ENCODE measurements at regions of chr12 and their contacts with region 1.

Region 1: GRCh38 chr12:54201001-54201794 is 12.4 kb upstream of the SMUG1 start:
- DNase-seq: peak; percentile 35 to 78 (median 62)
- ATAC-seq: peak; percentile 98
- H3K4me3 ChIP-seq: no peak overlapping the region
- H3K4me3 Mint-ChIP-seq: no peak overlapping the region
- H3K27ac ChIP-seq: no peak overlapping the region
- H3K27ac Mint-ChIP-seq: no peak overlapping the region
- H3K4me1 ChIP-seq: no peaks in the 10 kb centered on the region
- H3K4me1 Mint-ChIP-seq: no peaks in the 10 kb centered on the region
- H3K27me3 ChIP-seq: peaks cover 10 to 24% of the 10 kb centered on the region in 2 experiments
- H3K27me3 Mint-ChIP-seq: peaks cover 70% of the 10 kb centered on the region
- CTCF ChIP-seq: peak; percentile 90

Region 2: GRCh38 chr12:53984901-53985709 is 216.1 kb before region 1 on chr12 and contains the start of gene HOXC10:
- CTCF ChIA-PET with region 1: interaction called, 17 read pairs
- POLR2A ChIA-PET with region 1: no interaction called
- intact Hi-C with region 1: loop called in 1 of 2 experiments (anchors 1 kb)
- DNase-seq: peak; percentile 26 to 86 (median 72)
- ATAC-seq: peak; percentile 66
- H3K4me3 ChIP-seq: no peak within 1 kb of the TSS
- H3K4me3 Mint-ChIP-seq: peak within 1 kb of the TSS; percentile 49
- H3K27ac ChIP-seq: no peak within 1 kb of the TSS
- H3K27ac Mint-ChIP-seq: no peak within 1 kb of the TSS
- H3K4me1 ChIP-seq: peaks cover 27% of the 10 kb centered on the region
- H3K4me1 Mint-ChIP-seq: peaks cover 36% of the 10 kb centered on the region
- H3K27me3 ChIP-seq: peaks cover 75 to 85% of the 10 kb centered on the region in 2 experiments
- H3K27me3 Mint-ChIP-seq: peaks cover 90% of the 10 kb centered on the region
- CTCF ChIP-seq: peak; percentile 44
- total RNA-seq, gene HOXC10: not detected